Body of pancreas (tissue), 4 donors: ENCODE measurements at regions of chr6 and their contacts with region 1.

Region 1: DNA sequence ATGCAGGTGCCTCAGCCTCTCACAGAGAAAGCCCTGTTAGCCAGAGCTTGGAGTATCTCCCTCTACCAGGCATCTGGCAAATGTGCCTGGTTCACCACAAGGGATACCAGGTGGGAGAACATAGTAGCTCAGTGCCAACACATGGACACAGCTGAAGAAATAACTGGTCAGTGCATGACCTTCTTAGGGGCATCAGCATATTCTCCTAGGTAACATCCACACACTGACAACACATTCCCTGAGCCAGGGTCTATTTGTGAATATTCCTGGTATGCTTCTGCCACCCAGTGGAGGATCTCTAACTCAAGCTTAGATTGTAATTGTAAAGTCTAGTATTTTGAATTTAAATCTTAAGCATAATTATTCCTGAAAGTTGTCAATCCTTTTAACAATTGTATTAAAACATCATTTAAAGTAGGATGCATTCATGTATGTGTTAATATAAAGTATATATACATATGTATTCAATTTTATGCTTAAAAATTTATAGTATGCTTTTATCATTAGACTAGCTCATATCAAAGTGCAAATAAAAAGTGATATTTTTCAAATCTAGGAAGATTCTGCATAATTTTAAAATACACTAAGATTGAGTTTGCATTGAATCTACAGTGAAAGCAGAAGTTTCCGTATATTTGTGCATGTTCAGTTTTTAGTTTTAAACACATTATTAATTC is 45.3 kb upstream of the COL21A1 start:
- DNase-seq: peak in 2 of 4 donors; percentile 8 to 31
- ATAC-seq: no peak
- H3K4me3 ChIP-seq: no peak overlapping the region
- H3K27ac ChIP-seq: no peak overlapping the region
- H3K4me1 ChIP-seq: no peaks in the 10 kb centered on the region
- H3K27me3 ChIP-seq: no peaks in the 10 kb centered on the region
- CTCF ChIP-seq: peak in 6 of 7 experiments; percentile 20 to 57 (median 46)
- POLR2A ChIP-seq: no peak

Region 2: GRCh38 chr6:55980627-55981211 is 311.9 kb before region 1 on chr6:
- intact Hi-C with region 1: loop called (anchors 10 kb)
- DNase-seq: peak in 3 of 4 donors; percentile 13 to 24 (median 22)
- ATAC-seq: peak; percentile 50
- H3K4me3 ChIP-seq: no peak overlapping the region
- H3K27ac ChIP-seq: no peak overlapping the region
- H3K4me1 ChIP-seq: no peaks in the 10 kb centered on the region
- H3K27me3 ChIP-seq: no peaks in the 10 kb centered on the region
- CTCF ChIP-seq: peak; percentile 48 to 74 (median 59)
- POLR2A ChIP-seq: no peak